Esophagus muscularis mucosa (tissue), 4 donors: ENCODE measurements at regions of chr5 and their contacts with region 1.

Region 1: GRCh38 chr5:67149951-67150523 is 46.6 kb downstream of the CD180 start:
- DNase-seq: no peak
- H3K4me3 ChIP-seq: peak overlapping the region in 1 of 4 donors; percentile 33
- H3K27ac ChIP-seq: no peak overlapping the region
- H3K4me1 ChIP-seq: peaks cover 0 to 24% (median 10%) of the 10 kb centered on the region in 4 donors
- H3K27me3 ChIP-seq: no peaks in the 10 kb centered on the region
- CTCF ChIP-seq: peak; percentile 32 to 51 (median 44)
- EP300 ChIP-seq: no peak
- POLR2A ChIP-seq: no peak

Region 2: DNA sequence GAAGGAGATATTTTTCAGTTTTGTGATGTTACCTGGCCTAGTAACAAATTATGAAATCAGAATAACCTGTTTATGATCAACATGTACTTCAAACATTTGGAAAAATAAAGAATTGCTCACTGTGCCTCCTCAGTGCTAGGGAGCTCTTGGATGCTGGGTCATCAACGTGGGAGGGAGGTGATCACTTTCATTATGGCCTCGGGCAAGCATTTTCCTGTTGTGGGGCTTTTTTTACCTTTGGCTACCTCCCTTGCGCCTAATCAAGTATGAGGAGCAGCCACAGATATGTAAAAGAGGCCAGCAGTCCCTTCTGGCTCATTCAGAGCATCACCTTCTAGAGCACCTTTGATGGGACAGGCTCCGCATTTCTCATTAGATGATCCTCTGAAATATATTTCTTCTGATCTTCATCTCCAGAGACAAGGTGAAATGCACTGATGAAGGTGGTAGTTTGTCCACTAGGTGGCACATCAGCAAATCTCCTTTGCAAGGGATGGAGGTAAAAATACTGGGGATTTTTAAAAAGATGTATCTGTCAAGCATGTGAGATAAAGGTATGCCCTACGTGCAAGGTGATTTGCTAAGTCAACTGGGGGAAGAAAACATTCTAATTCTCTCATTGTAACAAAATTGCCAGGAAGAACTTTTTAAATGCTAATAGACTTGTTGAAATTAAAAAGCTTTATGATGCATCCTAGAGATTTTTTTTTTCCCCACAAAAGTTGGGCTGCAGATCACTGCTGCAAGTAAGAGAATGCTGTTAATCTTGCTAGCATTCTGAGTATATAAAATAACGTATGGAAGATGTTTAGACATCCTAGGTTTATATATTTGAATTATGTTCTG is 335.7 kb before region 1 on chr5:
- intact Hi-C with region 1: loop called (anchors 5 kb)
- DNase-seq: no peak
- H3K4me3 ChIP-seq: no peak overlapping the region
- H3K27ac ChIP-seq: no peak overlapping the region
- H3K4me1 ChIP-seq: peaks cover 0 to 6% (median 0%) of the 10 kb centered on the region in 4 donors
- H3K27me3 ChIP-seq: no peaks in the 10 kb centered on the region
- CTCF ChIP-seq: peak; percentile 58 to 76 (median 71)
- EP300 ChIP-seq: no peak
- POLR2A ChIP-seq: no peak

Region 3: GRCh38 chr5:67003935-67004729 is 145.9 kb before region 1 on chr5:
- intact Hi-C with region 1: no loop called
- DNase-seq: peak; percentile 96
- H3K4me3 ChIP-seq: peak overlapping the region; percentile 63 to 70 (median 65)
- H3K27ac ChIP-seq: peak overlapping the region; percentile 87 to 93 (median 87)
- H3K4me1 ChIP-seq: peaks cover 35 to 55% (median 48%) of the 10 kb centered on the region in 4 donors
- H3K27me3 ChIP-seq: no peaks in the 10 kb centered on the region
- CTCF ChIP-seq: no peak
- EP300 ChIP-seq: no peak
- POLR2A ChIP-seq: peak; percentile 12

Region 4: GRCh38 chr5:67050136-67050535 is 99.9 kb before region 1 on chr5:
- intact Hi-C with region 1: no loop called
- DNase-seq: no peak
- H3K4me3 ChIP-seq: no peak overlapping the region
- H3K27ac ChIP-seq: peak overlapping the region in 2 of 4 donors; percentile 5 to 32
- H3K4me1 ChIP-seq: peaks cover 36 to 67% (median 59%) of the 10 kb centered on the region in 4 donors
- H3K27me3 ChIP-seq: no peaks in the 10 kb centered on the region
- CTCF ChIP-seq: no peak
- EP300 ChIP-seq: no peak
- POLR2A ChIP-seq: no peak

Region 5: DNA sequence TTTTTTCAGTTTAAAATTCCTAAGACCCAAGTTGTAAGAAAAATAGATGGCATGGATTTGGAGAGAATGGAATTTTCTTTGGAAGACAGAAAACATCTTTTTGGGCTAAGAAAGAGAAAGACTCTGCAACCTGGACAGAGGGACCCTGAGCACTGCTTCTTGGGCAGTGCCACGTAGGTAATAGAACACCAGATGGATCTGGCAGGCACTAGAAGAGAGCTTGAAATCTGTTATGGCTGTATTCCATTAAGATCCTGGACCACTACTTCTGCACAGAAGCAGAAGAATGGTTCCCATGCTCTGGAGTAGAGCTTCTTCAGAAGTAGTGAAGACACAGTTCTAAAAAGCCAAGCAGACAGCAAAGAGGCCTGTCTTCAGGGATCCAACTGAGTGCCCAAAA is 352.9 kb after region 1 on chr5:
- intact Hi-C with region 1: no loop called
- DNase-seq: no peak
- H3K4me3 ChIP-seq: no peak overlapping the region
- H3K27ac ChIP-seq: no peak overlapping the region
- H3K4me1 ChIP-seq: peaks cover 0 to 6% (median 0%) of the 10 kb centered on the region in 4 donors
- H3K27me3 ChIP-seq: no peaks in the 10 kb centered on the region
- CTCF ChIP-seq: no peak
- EP300 ChIP-seq: no peak
- POLR2A ChIP-seq: no peak

Region 6: DNA sequence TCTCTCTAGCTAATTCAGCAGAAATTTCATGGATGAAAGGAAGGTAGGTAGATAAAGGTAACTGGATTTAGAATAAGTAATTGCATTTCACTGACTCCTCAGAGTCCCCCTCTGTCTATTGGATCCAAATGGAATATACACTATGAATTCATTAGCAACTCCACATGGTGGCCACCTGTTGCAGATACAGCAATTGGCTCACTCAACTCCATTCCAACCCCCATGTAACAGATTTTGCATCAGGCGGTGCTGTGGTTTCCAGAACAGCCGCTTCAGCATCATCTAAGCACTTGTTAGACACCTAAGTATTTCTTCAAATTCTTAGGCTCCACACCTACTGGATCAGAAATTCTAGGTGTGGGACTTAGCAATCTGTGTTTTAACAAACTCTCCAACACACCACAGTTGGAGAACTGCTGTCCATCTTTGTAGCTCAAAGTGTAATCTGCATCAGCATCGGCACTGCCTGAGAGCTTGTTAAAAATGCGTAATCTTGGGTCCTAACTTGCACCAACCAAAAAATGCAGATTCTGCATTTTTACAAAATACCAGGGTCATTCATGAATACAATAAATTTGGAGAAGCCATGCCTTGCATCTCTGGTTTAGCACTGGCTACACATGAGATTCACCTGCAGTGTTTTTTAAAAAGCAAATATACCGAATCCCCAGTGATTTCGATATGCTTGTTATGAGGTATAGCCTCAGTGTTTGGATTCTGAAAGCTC is 460.3 kb after region 1 on chr5:
- intact Hi-C with region 1: no loop called
- DNase-seq: no peak
- H3K4me3 ChIP-seq: no peak overlapping the region
- H3K27ac ChIP-seq: no peak overlapping the region
- H3K4me1 ChIP-seq: no peaks in the 10 kb centered on the region
- H3K27me3 ChIP-seq: no peaks in the 10 kb centered on the region
- CTCF ChIP-seq: no peak
- EP300 ChIP-seq: no peak
- POLR2A ChIP-seq: no peak